AG04449 (cell line): ENCODE measurements at regions of chr16 and their contacts with region 1.

Region 1: GRCh38 chr16:31179747-31180459 is at the start of gene FUS:
- DNase-seq: peak; percentile 47
- H3K4me3 ChIP-seq: peak within 1 kb of the TSS; percentile 95
- CTCF ChIP-seq: no peak

Region 2: DNA sequence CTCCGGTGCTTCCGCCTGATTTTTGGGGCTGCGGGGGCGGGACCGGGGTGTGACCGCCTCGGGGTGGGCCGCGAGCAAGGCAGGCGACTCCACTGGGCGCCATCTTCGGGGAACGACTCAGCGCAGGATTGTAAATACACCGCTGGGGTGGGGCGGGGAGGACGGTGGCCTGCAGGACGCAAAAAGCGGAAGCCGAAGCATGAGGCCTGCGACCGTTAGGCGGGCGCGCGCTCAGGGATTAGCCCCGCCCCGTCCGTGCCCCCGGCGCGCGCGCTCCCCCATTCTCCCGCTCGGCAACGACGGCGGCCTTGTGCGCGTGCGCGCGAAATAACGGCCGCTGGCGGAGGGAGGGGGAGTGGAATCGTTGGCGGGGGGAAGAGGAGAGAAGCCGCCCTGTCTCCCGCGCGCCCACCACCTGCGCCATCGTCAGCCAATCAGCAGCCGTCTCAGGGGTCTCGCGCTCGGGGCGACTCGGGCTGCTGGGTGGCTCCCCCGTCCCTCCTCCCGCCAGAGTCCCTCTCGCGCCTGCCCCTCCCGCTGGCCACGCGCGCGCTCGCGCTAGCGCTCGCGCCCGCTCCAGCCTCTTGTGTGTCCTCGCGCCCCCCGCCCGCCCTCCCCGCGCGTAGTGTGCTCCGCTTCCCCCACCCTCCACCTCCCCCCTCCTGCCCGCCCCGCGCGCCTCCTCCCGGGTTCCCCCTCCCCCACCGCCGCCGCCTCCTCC is 1374.4 kb before region 1 on chr16:
- CTCF ChIA-PET with region 1: no interaction called
- POLR2A ChIA-PET with region 1: no interaction called
- DNase-seq: peak; percentile 83
- H3K4me3 ChIP-seq: peak overlapping the region; percentile 86
- CTCF ChIP-seq: no peak

Region 3: DNA sequence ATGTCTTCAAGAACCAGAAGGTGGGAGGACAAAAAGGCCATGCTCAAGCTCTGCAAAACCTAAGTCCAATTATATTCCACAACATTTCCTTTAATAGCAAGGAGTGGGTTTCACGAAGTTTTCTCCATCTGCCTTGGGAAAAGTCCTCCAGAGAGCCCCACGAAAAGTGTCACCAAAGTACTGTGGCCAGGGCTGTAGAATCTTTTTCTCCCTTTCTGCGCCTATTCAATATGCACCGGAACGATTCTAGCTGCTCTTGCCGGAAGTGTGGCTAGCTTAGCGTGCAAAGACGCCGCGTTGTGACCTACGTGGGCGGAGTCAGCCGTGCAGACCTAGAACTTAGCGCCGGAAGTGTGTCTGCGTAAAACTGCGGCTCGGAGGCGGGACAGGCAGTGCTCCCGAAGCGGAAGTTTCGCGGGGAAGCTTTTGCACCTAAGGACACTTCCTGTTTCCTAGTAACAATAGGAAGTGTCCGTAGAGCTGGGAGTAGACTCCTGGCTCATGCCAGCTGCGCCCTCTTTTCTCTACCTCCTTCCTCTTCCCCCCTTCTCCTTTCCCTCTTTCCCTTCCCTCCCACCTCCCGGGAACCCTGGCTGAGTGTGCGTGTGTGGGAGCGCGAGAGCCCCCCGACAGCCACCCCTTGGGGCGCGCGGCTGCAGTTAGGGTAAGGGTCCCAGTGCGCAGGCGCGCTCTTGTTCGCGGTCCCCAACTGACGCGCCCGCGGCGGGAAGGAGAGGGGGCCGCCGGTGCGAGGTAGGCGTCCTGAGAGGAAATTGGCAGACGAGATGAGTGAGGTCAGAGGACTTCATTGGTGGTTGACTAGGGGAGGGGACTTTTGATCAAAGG is 105.7 kb before region 1 on chr16 and contains the starts of genes ZNF646 and ZNF668:
- CTCF ChIA-PET with region 1: no interaction called
- POLR2A ChIA-PET with region 1: interaction called, 14 read pairs
- DNase-seq: peak; percentile 94
- H3K4me3 ChIP-seq: peak within 1 kb of the TSS; percentile 98
- CTCF ChIP-seq: no peak

Region 4: GRCh38 chr16:31134625-31135547 is 45.0 kb before region 1 on chr16:
- CTCF ChIA-PET with region 1: no interaction called
- POLR2A ChIA-PET with region 1: no interaction called
- DNase-seq: no peak
- H3K4me3 ChIP-seq: no peak overlapping the region
- CTCF ChIP-seq: no peak

Region 5: GRCh38 chr16:31157136-31157535 is 22.8 kb before region 1 on chr16:
- CTCF ChIA-PET with region 1: interaction called, 35 read pairs
- POLR2A ChIA-PET with region 1: interaction called, 6 read pairs
- DNase-seq: no peak
- H3K4me3 ChIP-seq: no peak overlapping the region
- CTCF ChIP-seq: no peak

Region 6: GRCh38 chr16:31202414-31203375 is 22.8 kb after region 1 on chr16 and contains the start of gene PYCARD:
- CTCF ChIA-PET with region 1: no interaction called
- POLR2A ChIA-PET with region 1: interaction called, 24 read pairs
- DNase-seq: no peak
- H3K4me3 ChIP-seq: peak within 1 kb of the TSS; percentile 69
- CTCF ChIP-seq: no peak

Region 7: GRCh38 chr16:31458844-31459721 is 279.2 kb after region 1 on chr16 and contains the start of gene ARMC5:
- CTCF ChIA-PET with region 1: no interaction called
- POLR2A ChIA-PET with region 1: interaction called, 25 read pairs
- DNase-seq: peak; percentile 90
- H3K4me3 ChIP-seq: peak within 1 kb of the TSS; percentile 64
- CTCF ChIP-seq: peak; percentile 79